CD8-positive, alpha-beta T cell (primary cell): ENCODE measurements at regions of chr17 and their contacts with region 1.

Region 1: DNA sequence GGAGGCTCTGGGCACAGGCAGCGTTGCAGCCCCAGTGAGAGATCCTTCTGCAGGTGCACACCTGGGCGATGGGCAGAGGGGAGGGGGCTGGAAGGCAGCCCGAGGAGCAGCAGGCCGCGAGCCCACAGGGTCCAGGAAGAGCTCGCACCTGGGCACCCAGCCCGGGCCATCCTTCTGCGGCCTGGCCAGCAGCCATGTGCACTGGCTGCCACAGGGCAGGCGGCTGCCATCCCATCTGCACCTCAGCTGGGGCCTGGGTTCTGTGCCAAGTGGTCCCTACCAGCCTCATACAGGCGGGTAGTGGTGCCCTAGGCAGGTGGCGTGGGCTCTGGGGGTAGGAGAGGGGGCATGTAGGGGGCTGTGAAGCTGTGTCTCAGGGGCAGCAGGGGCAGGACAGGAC is 197.2 kb downstream of the RBFOX3 start:
- DNase-seq: no peak
- ATAC-seq: no peak
- H3K4me3 ChIP-seq: no peak overlapping the region
- H3K4me3 Mint-ChIP-seq: no peak overlapping the region
- H3K27ac ChIP-seq: no peak overlapping the region
- H3K27ac Mint-ChIP-seq: no peak overlapping the region
- H3K4me1 ChIP-seq: no peaks in the 10 kb centered on the region
- H3K4me1 Mint-ChIP-seq: no peaks in the 10 kb centered on the region
- H3K27me3 ChIP-seq: peaks cover 0 to 5% of the 10 kb centered on the region in 2 experiments
- H3K27me3 Mint-ChIP-seq: peaks cover 15% of the 10 kb centered on the region
- CTCF ChIP-seq: no peak

Region 2: GRCh38 chr17:79400989-79401703 is 12.5 kb before region 1 on chr17:
- CTCF ChIA-PET with region 1: interaction called, 13 read pairs
- POLR2A ChIA-PET with region 1: no interaction called
- intact Hi-C with region 1: no loop called
- DNase-seq: peak; percentile 53 to 84 (median 72)
- ATAC-seq: peak; percentile 97
- H3K4me3 ChIP-seq: peak overlapping the region; percentile 29 to 57
- H3K4me3 Mint-ChIP-seq: peak overlapping the region; percentile 72
- H3K27ac ChIP-seq: no peak overlapping the region
- H3K27ac Mint-ChIP-seq: no peak overlapping the region
- H3K4me1 ChIP-seq: peaks cover 11% of the 10 kb centered on the region
- H3K4me1 Mint-ChIP-seq: peaks cover 13% of the 10 kb centered on the region
- H3K27me3 ChIP-seq: peaks cover 4 to 11% of the 10 kb centered on the region in 2 experiments
- H3K27me3 Mint-ChIP-seq: peaks cover 37% of the 10 kb centered on the region
- CTCF ChIP-seq: peak; percentile 72